ENCODE measurements at regions of chr11 and their contacts with region 1.

Region 1: DNA sequence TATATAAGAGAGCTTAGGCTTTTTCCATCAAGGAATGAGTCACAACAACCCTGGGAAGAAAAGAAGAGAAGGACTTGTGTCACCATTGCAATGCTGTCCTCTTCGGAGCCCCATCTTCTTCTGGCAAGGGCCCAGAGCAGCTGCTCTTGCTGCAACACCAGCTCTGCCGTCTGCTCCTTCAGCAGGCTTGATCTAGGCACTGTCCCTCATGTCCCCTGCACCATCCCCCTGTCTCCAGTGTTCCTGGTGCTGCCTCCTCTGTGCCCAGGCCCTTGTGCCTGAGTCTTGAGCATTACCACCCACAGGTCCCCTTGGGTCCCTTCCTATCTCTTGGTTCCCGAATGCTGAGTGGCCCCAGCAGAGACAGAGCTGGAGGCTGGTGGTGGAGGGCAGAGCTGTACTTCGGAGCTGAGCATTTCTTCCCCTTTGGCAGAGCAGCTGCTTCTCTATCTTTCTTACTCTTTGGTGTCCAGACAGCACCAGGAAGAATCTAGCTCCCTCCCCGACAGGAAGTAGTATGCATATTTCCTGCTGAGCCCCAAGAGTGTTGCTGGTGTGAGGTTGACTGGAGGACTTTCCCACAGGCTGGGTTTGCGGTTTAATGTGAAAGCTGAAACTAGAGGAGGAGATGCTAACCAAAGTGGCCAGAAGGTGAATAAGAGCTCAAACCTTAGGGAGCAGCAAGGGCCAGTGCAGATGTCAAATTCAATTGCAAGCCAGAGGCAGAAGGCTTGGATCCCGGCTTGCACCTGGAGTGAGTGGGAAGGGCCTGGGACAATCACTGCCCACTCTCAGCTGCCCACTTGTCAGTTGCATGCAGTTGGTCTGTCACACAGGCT is 27.8 kb downstream of the WEE1 start:
- DNase-seq: peak; percentile 19 to 66 (median 52)
- H3K4me3 ChIP-seq: peak overlapping the region; percentile 47
- H3K4me3 Mint-ChIP-seq: peak overlapping the region; percentile 4 to 93 (median 77)
- H3K27ac ChIP-seq: no peak overlapping the region
- H3K27ac Mint-ChIP-seq: peak overlapping the region; percentile 31 to 99 (median 90)
- H3K4me1 ChIP-seq: peaks cover 20% of the 10 kb centered on the region
- H3K4me1 Mint-ChIP-seq: peaks cover 22 to 24% (median 24%) of the 10 kb centered on the region in 3 donors
- H3K27me3 ChIP-seq: no peaks in the 10 kb centered on the region
- H3K27me3 Mint-ChIP-seq: no peaks in the 10 kb centered on the region

Region 2: DNA sequence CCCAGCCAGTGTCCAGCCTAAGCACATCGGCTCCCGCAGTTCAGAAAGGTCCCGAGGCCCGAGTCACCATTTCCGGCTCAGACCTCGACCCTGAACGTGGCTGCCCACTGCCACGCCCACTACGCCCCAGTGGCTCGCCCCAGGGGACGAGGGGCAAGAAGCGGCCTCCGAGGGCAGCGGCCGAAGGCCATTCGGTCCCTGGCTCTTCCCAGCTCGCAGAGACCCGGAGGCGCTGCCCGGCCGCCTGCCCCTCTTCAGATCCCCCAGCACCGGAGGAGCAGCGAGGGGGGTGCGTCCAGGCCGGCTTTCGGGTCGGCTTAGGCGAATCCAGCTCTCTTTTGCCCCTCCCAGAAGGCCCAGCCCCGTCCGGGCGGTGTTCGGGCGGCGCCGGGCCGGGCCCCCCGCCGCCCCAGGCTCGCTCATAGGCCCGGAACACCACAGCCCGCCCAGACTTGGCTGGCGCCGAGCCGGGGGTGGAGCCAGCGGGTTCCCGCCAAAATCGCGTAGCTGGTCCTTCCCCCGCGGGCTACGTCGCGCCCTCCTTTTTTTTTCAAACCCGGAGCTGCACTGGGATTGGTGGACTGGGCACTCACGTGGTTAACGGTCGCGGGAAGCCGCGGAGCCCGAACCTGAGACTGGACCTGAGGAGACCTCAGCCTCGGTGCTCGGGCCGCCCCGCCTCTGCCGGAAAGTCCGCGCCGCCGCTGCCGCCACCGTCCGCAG is 28.0 kb before region 1 on chr11 and contains the start of gene WEE1:
- CTCF ChIA-PET with region 1: interaction called, 13 read pairs
- POLR2A ChIA-PET with region 1: interaction called, 10 read pairs
- DNase-seq: peak; percentile 89 to 97 (median 94)
- H3K4me3 ChIP-seq: peak within 1 kb of the TSS; percentile 76
- H3K4me3 Mint-ChIP-seq: peak within 1 kb of the TSS; percentile 84 to 96 (median 86)
- H3K27ac ChIP-seq: peak within 1 kb of the TSS; percentile 82
- H3K27ac Mint-ChIP-seq: peak within 1 kb of the TSS; percentile 3 to 97 (median 89)
- H3K4me1 ChIP-seq: peaks cover 5% of the 10 kb centered on the region
- H3K4me1 Mint-ChIP-seq: peaks cover 32 to 45% (median 43%) of the 10 kb centered on the region in 3 donors
- H3K27me3 ChIP-seq: no peaks in the 10 kb centered on the region
- H3K27me3 Mint-ChIP-seq: no peaks in the 10 kb centered on the region
- total RNA-seq, gene WEE1: 46.9 to 49.8 TPM